ENCODE measurements at regions of chr3 and their contacts with region 1.

Region 1: GRCh38 chr3:46909535-46910442 is 32.3 kb downstream of the PTH1R start:
- DNase-seq: peak; percentile 79 to 91 (median 87)
- H3K4me3 ChIP-seq: peak overlapping the region in 35 of 59 donors; percentile 0 to 50 (median 18)
- H3K27ac ChIP-seq: peak overlapping the region in 2 of 59 donors; percentile 18 to 25
- H3K27me3 ChIP-seq: no peaks in the 10 kb centered on the region
- CTCF ChIP-seq: peak; percentile 79 to 96 (median 91)

Region 2: DNA sequence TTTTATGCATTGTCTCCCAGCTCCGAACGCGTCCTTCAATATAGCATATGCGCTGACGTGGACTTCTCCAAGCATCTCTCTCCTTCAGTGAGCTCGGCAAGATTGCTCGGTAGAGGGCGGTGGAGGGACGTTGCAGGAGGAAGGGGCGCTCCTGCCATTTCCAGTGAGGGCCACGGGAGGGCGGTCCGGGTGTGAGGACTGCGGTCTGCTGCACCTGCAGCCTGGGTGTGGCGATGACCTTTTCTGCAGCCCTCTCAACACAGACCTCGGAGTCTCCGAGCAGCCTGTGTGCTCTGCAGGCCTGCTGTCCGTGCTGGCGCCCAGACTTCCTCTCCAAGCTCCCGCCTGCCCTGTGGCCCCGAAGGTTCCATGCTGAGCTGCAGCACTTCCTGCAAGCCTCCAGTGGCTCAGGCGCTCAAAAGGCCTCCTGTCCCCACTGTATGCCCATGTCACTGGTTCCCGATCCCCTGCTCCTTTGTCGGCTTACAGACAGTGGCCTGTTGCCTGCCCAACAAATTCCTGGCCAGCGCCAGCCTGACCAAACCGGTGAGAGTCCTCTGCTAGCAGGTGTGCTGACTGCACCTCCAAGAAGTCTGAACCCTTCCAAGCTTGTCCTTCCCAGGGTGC is 420.9 kb before region 1 on chr3:
- intact Hi-C with region 1: loop called in 1 of 2 experiments (anchors 5 kb)
- DNase-seq: peak; percentile 79 to 91 (median 86)
- H3K4me3 ChIP-seq: peak overlapping the region in 23 of 59 donors; percentile 10 to 48 (median 33)
- H3K27ac ChIP-seq: peak overlapping the region in 2 of 59 donors; percentile 17 to 61
- H3K27me3 ChIP-seq: no peaks in the 10 kb centered on the region
- CTCF ChIP-seq: peak; percentile 29 to 99 (median 95)

Region 3: GRCh38 chr3:46705022-46705530 is 204.7 kb before region 1 on chr3:
- intact Hi-C with region 1: loop called (anchors 2 kb)
- DNase-seq: peak; percentile 57 to 86 (median 80)
- H3K4me3 ChIP-seq: no peak overlapping the region
- H3K27ac ChIP-seq: no peak overlapping the region
- H3K27me3 ChIP-seq: peaks cover 0 to 5% (median 0%) of the 10 kb centered on the region in 45 donors
- CTCF ChIP-seq: peak; percentile 86 to 100 (median 97)

Region 4: GRCh38 chr3:46845791-46846623 is 63.8 kb before region 1 on chr3:
- intact Hi-C with region 1: loop called in 1 of 2 experiments (anchors 5 kb)
- DNase-seq: peak; percentile 24 to 86 (median 72)
- H3K4me3 ChIP-seq: peak overlapping the region; percentile 39 to 83 (median 67)
- H3K27ac ChIP-seq: peak overlapping the region in 57 of 59 donors; percentile 5 to 89 (median 74)
- H3K27me3 ChIP-seq: no peaks in the 10 kb centered on the region
- CTCF ChIP-seq: peak in 55 of 56 donors; percentile 32 to 86 (median 62)

Region 5: DNA sequence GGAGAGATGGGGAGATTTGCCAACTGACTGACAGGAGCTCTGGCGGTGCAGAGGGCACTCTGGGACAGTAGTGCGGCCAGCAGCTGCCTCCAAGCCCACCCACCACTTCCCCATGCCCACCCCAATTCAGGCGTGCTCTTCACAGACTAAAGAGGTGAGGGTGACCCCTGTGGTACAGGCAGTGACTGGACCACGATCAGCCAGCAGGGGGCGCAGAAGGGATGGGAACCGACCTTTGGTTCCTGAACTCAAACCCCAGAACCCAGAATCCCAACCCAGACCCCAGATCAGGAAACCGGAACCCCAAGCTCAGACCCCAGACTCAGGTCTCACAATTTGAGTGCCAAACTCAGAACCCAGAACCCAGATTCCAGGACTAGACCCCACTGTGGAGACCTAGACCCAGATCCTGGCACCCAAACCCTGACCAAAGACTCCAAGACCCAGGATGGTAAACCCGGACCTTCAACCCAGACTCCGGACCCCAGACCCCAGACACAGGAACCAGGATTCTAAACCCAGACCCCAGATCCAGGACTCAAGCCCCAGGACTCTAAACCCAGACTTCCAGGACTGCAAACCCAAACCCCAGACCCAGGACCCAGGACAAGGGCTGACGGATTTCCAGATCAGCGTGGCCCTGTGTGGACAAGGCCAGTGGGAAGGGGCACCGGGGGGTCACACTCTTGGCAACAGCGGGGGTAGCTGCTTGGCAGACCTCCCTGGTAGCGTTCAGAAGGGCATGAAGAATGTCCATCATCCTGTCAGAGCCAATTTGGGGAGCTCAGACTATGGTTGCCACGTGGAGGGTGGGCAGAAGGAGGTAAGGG is 42.9 kb before region 1 on chr3:
- intact Hi-C with region 1: loop called (anchors 1 kb)
- DNase-seq: peak in 9 of 10 donors; percentile 71 to 86 (median 80)
- H3K4me3 ChIP-seq: no peak overlapping the region
- H3K27ac ChIP-seq: peak overlapping the region in 30 of 59 donors; percentile 6 to 80 (median 56)
- H3K27me3 ChIP-seq: peaks cover 0 to 4% (median 0%) of the 10 kb centered on the region in 45 donors
- CTCF ChIP-seq: peak; percentile 64 to 95 (median 85)